ENCODE measurements at regions of chr6 and their contacts with region 1.

Region 1: DNA sequence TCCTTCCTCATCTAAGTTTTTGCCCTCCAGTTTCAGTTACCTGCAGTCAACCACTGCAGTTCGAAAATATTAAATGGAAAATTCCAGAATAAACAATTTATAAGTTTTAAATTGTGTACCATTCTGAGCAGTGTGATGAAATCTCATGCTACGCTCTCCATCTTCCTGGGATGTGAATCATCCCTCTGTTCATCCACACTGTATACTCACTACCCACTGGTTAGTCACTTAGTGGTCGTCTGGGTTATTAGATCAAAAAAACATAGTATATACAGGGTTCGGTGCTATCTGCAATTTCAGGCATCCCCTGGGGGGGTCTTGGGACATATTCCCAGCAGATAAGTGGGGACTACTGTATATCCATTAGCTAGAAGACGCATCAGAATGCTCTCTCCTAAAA is 151.9 kb upstream of the SLC22A16 start:
- DNase-seq: no peak
- H3K4me3 ChIP-seq: no peak overlapping the region
- H3K27ac ChIP-seq: no peak overlapping the region
- H3K4me1 ChIP-seq: no peaks in the 10 kb centered on the region
- H3K27me3 ChIP-seq: no peaks in the 10 kb centered on the region
- CTCF ChIP-seq: no peak
- POLR2A ChIP-seq: no peak

Region 2: GRCh38 chr6:110614586-110614985 is 13.7 kb before region 1 on chr6:
- intact Hi-C with region 1: loop called (anchors 2 kb)
- DNase-seq: no peak
- H3K4me3 ChIP-seq: no peak overlapping the region
- H3K27ac ChIP-seq: no peak overlapping the region
- H3K4me1 ChIP-seq: no peaks in the 10 kb centered on the region
- H3K27me3 ChIP-seq: no peaks in the 10 kb centered on the region
- CTCF ChIP-seq: no peak
- POLR2A ChIP-seq: no peak

Region 3: GRCh38 chr6:110682460-110682853 is 54.1 kb after region 1 on chr6:
- intact Hi-C with region 1: no loop called
- DNase-seq: peak in 1 of 2 donors; percentile 74
- H3K4me3 ChIP-seq: no peak overlapping the region
- H3K27ac ChIP-seq: no peak overlapping the region
- H3K4me1 ChIP-seq: no peaks in the 10 kb centered on the region
- H3K27me3 ChIP-seq: no peaks in the 10 kb centered on the region
- CTCF ChIP-seq: peak; percentile 54 to 80 (median 76)
- POLR2A ChIP-seq: no peak